IMR-90 (cell line): ENCODE measurements at regions of chr1 and their contacts with region 1.

Region 1: GRCh38 chr1:233790662-233791375 is 113.7 kb upstream of the SLC35F3 start:
- DNase-seq: peak; percentile 34
- ATAC-seq: peak; percentile 73
- H3K4me3 ChIP-seq: no peak overlapping the region
- H3K27ac ChIP-seq: no peak overlapping the region
- H3K4me1 ChIP-seq: no peaks in the 10 kb centered on the region
- H3K27me3 ChIP-seq: no peaks in the 10 kb centered on the region
- CTCF ChIP-seq: peak; percentile 54
- POLR2A ChIP-seq: no peak
- RAD21 ChIP-seq: peak; percentile 45

Region 2: DNA sequence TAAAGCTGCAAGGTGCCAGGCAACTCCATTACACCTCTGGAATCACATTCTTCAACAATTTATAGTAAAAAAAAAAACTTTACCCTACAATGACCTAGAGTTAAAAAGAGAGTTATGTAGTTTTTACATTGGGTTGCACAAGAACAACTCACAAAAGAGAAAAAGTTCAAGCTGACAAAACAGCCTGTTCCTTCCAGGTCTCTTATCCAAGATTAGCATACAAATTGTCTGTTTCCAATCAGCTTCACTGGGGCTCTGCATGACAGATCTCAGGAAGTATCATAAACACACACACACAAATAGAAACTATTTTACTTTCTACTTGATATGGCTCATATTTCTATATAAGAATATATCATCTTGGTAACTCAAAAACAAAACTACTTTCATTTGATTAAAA is 649.8 kb before region 1 on chr1:
- CTCF ChIA-PET with region 1: no interaction called
- POLR2A ChIA-PET with region 1: no interaction called
- dilution Hi-C with region 1: no loop called
- in situ Hi-C with region 1: no loop called
- intact Hi-C with region 1: no loop called
- DNase-seq: no peak
- ATAC-seq: no peak
- H3K4me3 ChIP-seq: no peak overlapping the region
- H3K27ac ChIP-seq: peak overlapping the region; percentile 41; the same call in 1 of the 2 replicates
- H3K4me1 ChIP-seq: peaks cover 4% of the 10 kb centered on the region; the same call in 1 of the 2 replicates
- H3K27me3 ChIP-seq: no peaks in the 10 kb centered on the region
- CTCF ChIP-seq: no peak
- POLR2A ChIP-seq: no peak
- RAD21 ChIP-seq: no peak

Region 3: GRCh38 chr1:233304489-233305102 is 486.2 kb before region 1 on chr1:
- CTCF ChIA-PET with region 1: no interaction called
- POLR2A ChIA-PET with region 1: no interaction called
- dilution Hi-C with region 1: no loop called
- in situ Hi-C with region 1: no loop called
- intact Hi-C with region 1: loop called (anchors 2 kb)
- DNase-seq: peak; percentile 30
- ATAC-seq: 0 out of 2 replicates have a peak, but pooled peaks have one; percentile 67
- H3K4me3 ChIP-seq: no peak overlapping the region
- H3K27ac ChIP-seq: no peak overlapping the region
- H3K4me1 ChIP-seq: peaks cover 2% of the 10 kb centered on the region; the same call in 1 of the 2 replicates
- H3K27me3 ChIP-seq: no peaks in the 10 kb centered on the region
- CTCF ChIP-seq: peak; percentile 76
- POLR2A ChIP-seq: no peak
- RAD21 ChIP-seq: peak; percentile 74

Region 4: DNA sequence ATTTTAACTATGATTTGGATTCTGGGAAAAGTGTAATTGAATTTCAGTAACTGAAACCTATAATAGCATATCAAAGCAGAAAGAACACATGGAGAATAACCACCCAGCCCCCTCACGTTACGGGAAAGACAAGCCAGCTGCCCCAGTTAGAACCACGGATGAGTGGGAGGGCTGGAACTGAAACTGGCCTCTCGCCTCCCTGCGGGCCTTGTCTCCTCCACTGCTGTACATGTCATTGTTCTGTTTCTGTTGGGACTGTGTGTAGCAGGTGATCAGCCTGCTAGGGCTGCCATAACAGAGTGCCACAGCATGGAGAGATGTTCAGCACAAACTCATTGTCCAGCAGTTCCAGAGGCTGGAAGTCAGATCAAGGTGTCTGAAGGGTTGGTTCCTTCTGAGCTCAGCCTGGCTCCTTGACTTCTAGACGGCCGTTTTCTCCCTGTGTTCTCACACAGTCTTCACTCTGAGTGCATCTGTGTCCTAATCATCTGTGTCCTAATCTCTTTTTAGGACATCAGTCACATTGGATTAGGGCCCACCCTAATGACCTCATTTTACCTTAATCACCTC is 410.9 kb before region 1 on chr1:
- CTCF ChIA-PET with region 1: no interaction called
- POLR2A ChIA-PET with region 1: no interaction called
- dilution Hi-C with region 1: no loop called
- in situ Hi-C with region 1: no loop called
- intact Hi-C with region 1: no loop called
- DNase-seq: no peak
- ATAC-seq: no peak
- H3K4me3 ChIP-seq: no peak overlapping the region
- H3K27ac ChIP-seq: no peak overlapping the region
- H3K4me1 ChIP-seq: no peaks in the 10 kb centered on the region
- H3K27me3 ChIP-seq: no peaks in the 10 kb centered on the region
- CTCF ChIP-seq: no peak
- POLR2A ChIP-seq: no peak
- RAD21 ChIP-seq: no peak

Region 5: GRCh38 chr1:233394860-233395717 is 395.7 kb before region 1 on chr1:
- CTCF ChIA-PET with region 1: interaction called, 5 read pairs
- POLR2A ChIA-PET with region 1: no interaction called
- dilution Hi-C with region 1: no loop called
- in situ Hi-C with region 1: no loop called
- intact Hi-C with region 1: loop called (anchors 2 kb)
- DNase-seq: peak; percentile 50
- ATAC-seq: peak; percentile 97
- H3K4me3 ChIP-seq: no peak overlapping the region
- H3K27ac ChIP-seq: no peak overlapping the region
- H3K4me1 ChIP-seq: no peaks in the 10 kb centered on the region
- H3K27me3 ChIP-seq: no peaks in the 10 kb centered on the region; the same call in 1 of the 2 replicates
- CTCF ChIP-seq: peak; percentile 73
- POLR2A ChIP-seq: no peak
- RAD21 ChIP-seq: peak; percentile 66

Region 6: GRCh38 chr1:233440951-233441401 is 349.8 kb before region 1 on chr1:
- CTCF ChIA-PET with region 1: interaction called, 3 read pairs
- POLR2A ChIA-PET with region 1: no interaction called
- dilution Hi-C with region 1: no loop called
- in situ Hi-C with region 1: no loop called
- intact Hi-C with region 1: loop called (anchors 2 kb)
- DNase-seq: peak; percentile 28
- ATAC-seq: no peak
- H3K4me3 ChIP-seq: no peak overlapping the region
- H3K27ac ChIP-seq: no peak overlapping the region
- H3K4me1 ChIP-seq: no peaks in the 10 kb centered on the region
- H3K27me3 ChIP-seq: no peaks in the 10 kb centered on the region
- CTCF ChIP-seq: peak; percentile 51
- POLR2A ChIP-seq: no peak
- RAD21 ChIP-seq: peak; percentile 56

Region 7: GRCh38 chr1:233707153-233707879 is 83.5 kb before region 1 on chr1:
- CTCF ChIA-PET with region 1: no interaction called
- POLR2A ChIA-PET with region 1: no interaction called
- dilution Hi-C with region 1: no loop called
- in situ Hi-C with region 1: no loop called
- intact Hi-C with region 1: no loop called
- DNase-seq: peak; percentile 1
- ATAC-seq: no peak
- H3K4me3 ChIP-seq: no peak overlapping the region
- H3K27ac ChIP-seq: no peak overlapping the region
- H3K4me1 ChIP-seq: no peaks in the 10 kb centered on the region
- H3K27me3 ChIP-seq: no peaks in the 10 kb centered on the region
- CTCF ChIP-seq: no peak
- POLR2A ChIP-seq: no peak
- RAD21 ChIP-seq: no peak

Region 8: GRCh38 chr1:233750140-233750539 is 40.7 kb before region 1 on chr1:
- CTCF ChIA-PET with region 1: no interaction called
- POLR2A ChIA-PET with region 1: no interaction called
- dilution Hi-C with region 1: no loop called
- in situ Hi-C with region 1: no loop called
- intact Hi-C with region 1: no loop called
- DNase-seq: no peak
- ATAC-seq: no peak
- H3K4me3 ChIP-seq: no peak overlapping the region
- H3K27ac ChIP-seq: no peak overlapping the region
- H3K4me1 ChIP-seq: no peaks in the 10 kb centered on the region
- H3K27me3 ChIP-seq: no peaks in the 10 kb centered on the region
- CTCF ChIP-seq: no peak
- POLR2A ChIP-seq: no peak
- RAD21 ChIP-seq: no peak